Dendritic cell treated with granulocyte-macrophage colony-stimulating factor and Interleukin-4, amounts not matched to agents 40 ng/mL and 50 ng/mL, for 4 days (primary cell): ENCODE measurements at regions of chr11 and their contacts with region 1.

Region 1: GRCh38 chr11:17921659-17922415 is 91.0 kb downstream of the SERGEF start:
- H3K4me3 Mint-ChIP-seq: no peak overlapping the region
- H3K27ac Mint-ChIP-seq: peak overlapping the region; percentile 33
- H3K4me1 Mint-ChIP-seq: peaks cover 40% of the 10 kb centered on the region
- H3K27me3 Mint-ChIP-seq: no peaks in the 10 kb centered on the region

Region 2: DNA sequence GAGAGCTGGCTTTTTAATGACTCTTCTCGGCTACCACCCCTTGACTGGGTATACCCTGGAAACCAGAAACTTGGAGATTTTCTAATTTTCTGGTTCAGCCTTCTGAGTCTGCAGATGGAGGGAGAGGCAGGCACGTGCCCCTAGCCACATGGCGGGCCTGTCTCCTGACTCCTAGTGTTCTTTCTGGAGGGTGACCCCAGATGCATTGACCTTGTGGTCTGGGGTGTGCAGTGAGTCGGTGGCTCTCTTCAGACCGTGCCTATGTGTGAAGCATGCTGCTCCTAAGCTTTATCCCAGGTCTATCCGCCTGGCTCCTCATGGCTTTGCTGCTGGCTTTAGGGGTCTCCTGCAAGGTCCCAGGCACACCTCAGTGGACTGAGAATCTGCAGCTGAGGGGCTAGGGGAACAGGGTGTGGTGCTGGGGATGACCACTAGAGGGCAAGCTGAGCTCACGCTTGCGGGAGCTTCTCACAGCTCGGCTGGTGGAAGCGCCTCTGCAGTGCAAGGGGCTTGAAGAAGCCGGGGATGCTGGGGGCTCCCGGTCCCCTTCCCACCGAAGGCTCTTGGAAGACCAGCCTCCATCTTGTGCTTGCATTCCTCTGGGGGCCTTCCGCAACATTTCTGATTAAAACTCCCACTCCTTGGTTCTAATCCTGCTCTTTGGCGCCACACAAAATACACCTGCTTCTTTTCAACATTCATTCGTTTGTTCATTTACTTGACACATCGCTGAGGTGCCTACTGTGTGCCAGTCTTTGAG is 323.0 kb before region 1 on chr11:
- intact Hi-C with region 1: loop called (anchors 5 kb)
- H3K4me3 Mint-ChIP-seq: no peak overlapping the region
- H3K27ac Mint-ChIP-seq: no peak overlapping the region
- H3K4me1 Mint-ChIP-seq: no peaks in the 10 kb centered on the region
- H3K27me3 Mint-ChIP-seq: peaks cover 7% of the 10 kb centered on the region